Natural killer cell (primary cell): ENCODE measurements at regions of chr16 and their contacts with region 1.

Region 1: GRCh38 chr16:85554112-85554813 is 58.9 kb upstream of the GSE1 start:
- DNase-seq: peak; percentile 85 to 92
- ATAC-seq: peak; percentile 45 to 79 (median 68)
- H3K4me3 ChIP-seq: peak overlapping the region; percentile 100
- H3K4me3 Mint-ChIP-seq: peak overlapping the region; percentile 96
- H3K27ac ChIP-seq: peak overlapping the region; percentile 98
- H3K27ac Mint-ChIP-seq: peak overlapping the region; percentile 92 to 99
- H3K4me1 ChIP-seq: peaks cover 46% of the 10 kb centered on the region
- H3K4me1 Mint-ChIP-seq: peaks cover 40 to 56% of the 10 kb centered on the region in 2 donors
- H3K27me3 ChIP-seq: no peaks in the 10 kb centered on the region
- H3K27me3 Mint-ChIP-seq: no peaks in the 10 kb centered on the region
- CTCF ChIP-seq: no peak

Region 2: GRCh38 chr16:85491058-85491771 is 63.0 kb before region 1 on chr16:
- intact Hi-C with region 1: no loop called
- DNase-seq: peak; percentile 32 to 65
- ATAC-seq: peak; percentile 34 to 70 (median 69)
- H3K4me3 ChIP-seq: no peak overlapping the region
- H3K4me3 Mint-ChIP-seq: no peak overlapping the region
- H3K27ac ChIP-seq: no peak overlapping the region
- H3K27ac Mint-ChIP-seq: peak overlapping the region in 1 of 2 donors; percentile 31
- H3K4me1 ChIP-seq: peaks cover 9% of the 10 kb centered on the region
- H3K4me1 Mint-ChIP-seq: peaks cover 0 to 6% of the 10 kb centered on the region in 2 donors
- H3K27me3 ChIP-seq: no peaks in the 10 kb centered on the region
- H3K27me3 Mint-ChIP-seq: no peaks in the 10 kb centered on the region
- CTCF ChIP-seq: peak; percentile 55

Region 3: DNA sequence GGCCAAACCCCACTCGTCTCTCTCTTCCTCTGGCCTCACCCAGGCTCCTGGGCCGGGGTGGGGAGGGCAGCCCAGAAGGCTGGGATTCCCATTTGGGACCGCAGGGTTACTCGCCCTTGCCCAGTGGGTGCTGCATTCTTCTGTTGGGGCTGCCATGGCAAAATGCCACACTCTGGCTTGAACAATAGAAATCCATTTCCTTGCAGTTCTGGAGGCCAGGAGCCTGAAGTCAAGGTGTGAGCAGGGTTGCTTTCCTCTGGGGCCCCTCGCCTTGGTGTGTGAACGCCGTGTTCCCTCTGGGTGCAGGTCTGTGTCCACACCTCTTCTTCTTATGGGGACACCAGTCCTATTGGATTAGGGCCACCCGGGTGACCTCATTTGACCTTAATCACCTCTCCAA is 46.9 kb before region 1 on chr16:
- intact Hi-C with region 1: no loop called
- DNase-seq: no peak
- ATAC-seq: no peak
- H3K4me3 ChIP-seq: no peak overlapping the region
- H3K4me3 Mint-ChIP-seq: no peak overlapping the region
- H3K27ac ChIP-seq: no peak overlapping the region
- H3K27ac Mint-ChIP-seq: no peak overlapping the region
- H3K4me1 ChIP-seq: no peaks in the 10 kb centered on the region
- H3K4me1 Mint-ChIP-seq: peaks cover 0 to 10% of the 10 kb centered on the region in 2 donors
- H3K27me3 ChIP-seq: no peaks in the 10 kb centered on the region
- H3K27me3 Mint-ChIP-seq: peaks cover 0 to 8% of the 10 kb centered on the region in 2 donors
- CTCF ChIP-seq: no peak

Region 4: GRCh38 chr16:85519540-85520231 is 34.6 kb before region 1 on chr16:
- intact Hi-C with region 1: loop called (anchors 1 kb)
- DNase-seq: peak; percentile 51 to 63
- ATAC-seq: peak in 2 of 3 donors; percentile 46 to 60
- H3K4me3 ChIP-seq: no peak overlapping the region
- H3K4me3 Mint-ChIP-seq: peak overlapping the region; percentile 65
- H3K27ac ChIP-seq: peak overlapping the region; percentile 94
- H3K27ac Mint-ChIP-seq: peak overlapping the region; percentile 85 to 86
- H3K4me1 ChIP-seq: peaks cover 37% of the 10 kb centered on the region
- H3K4me1 Mint-ChIP-seq: peaks cover 23 to 30% of the 10 kb centered on the region in 2 donors
- H3K27me3 ChIP-seq: no peaks in the 10 kb centered on the region
- H3K27me3 Mint-ChIP-seq: peaks cover 0 to 12% of the 10 kb centered on the region in 2 donors
- CTCF ChIP-seq: no peak

Region 5: GRCh38 chr16:85536073-85536410 is 18.2 kb before region 1 on chr16:
- intact Hi-C with region 1: loop called (anchors 2 kb)
- DNase-seq: no peak
- ATAC-seq: peak in 2 of 3 donors; percentile 36 to 37
- H3K4me3 ChIP-seq: no peak overlapping the region
- H3K4me3 Mint-ChIP-seq: no peak overlapping the region
- H3K27ac ChIP-seq: no peak overlapping the region
- H3K27ac Mint-ChIP-seq: peak overlapping the region in 1 of 2 donors; percentile 29
- H3K4me1 ChIP-seq: peaks cover 23% of the 10 kb centered on the region
- H3K4me1 Mint-ChIP-seq: peaks cover 16% of the 10 kb centered on the region in 2 donors
- H3K27me3 ChIP-seq: no peaks in the 10 kb centered on the region
- H3K27me3 Mint-ChIP-seq: peaks cover 0 to 4% of the 10 kb centered on the region in 2 donors
- CTCF ChIP-seq: no peak

Region 6: GRCh38 chr16:85569615-85570212 is 15.5 kb after region 1 on chr16:
- intact Hi-C with region 1: loop called (anchors 1 kb)
- DNase-seq: peak; percentile 62 to 69
- ATAC-seq: peak; percentile 51 to 66 (median 57)
- H3K4me3 ChIP-seq: peak overlapping the region; percentile 35
- H3K4me3 Mint-ChIP-seq: peak overlapping the region; percentile 95
- H3K27ac ChIP-seq: peak overlapping the region; percentile 86
- H3K27ac Mint-ChIP-seq: peak overlapping the region; percentile 96 to 99
- H3K4me1 ChIP-seq: peaks cover 98% of the 10 kb centered on the region
- H3K4me1 Mint-ChIP-seq: peaks cover 89 to 98% of the 10 kb centered on the region in 2 donors
- H3K27me3 ChIP-seq: no peaks in the 10 kb centered on the region
- H3K27me3 Mint-ChIP-seq: peaks cover 0 to 3% of the 10 kb centered on the region in 2 donors
- CTCF ChIP-seq: no peak